IMR-90 (cell line): ENCODE measurements at regions of chr2 and their contacts with region 1.

Region 1: DNA sequence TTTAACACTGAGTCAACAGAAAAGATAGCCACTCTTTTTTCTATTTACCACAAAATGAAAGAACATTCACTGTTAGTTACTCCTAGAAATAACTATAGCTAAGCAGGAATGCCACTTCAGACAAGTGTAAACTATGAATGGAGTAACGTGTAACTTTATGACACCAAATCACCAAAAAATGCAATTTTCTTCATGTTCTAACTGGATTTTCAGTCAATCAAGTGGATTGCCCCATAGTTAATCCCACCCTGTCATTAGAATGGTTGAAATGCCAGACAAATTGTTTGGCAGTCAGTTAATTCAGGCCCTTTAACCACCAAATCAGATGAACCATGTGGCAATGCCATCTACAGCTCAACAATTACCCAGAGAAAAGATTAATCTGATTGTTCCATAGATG is 9.9 kb downstream of the EPHA4 start:
- DNase-seq: no peak
- ATAC-seq: no peak
- H3K4me3 ChIP-seq: no peak overlapping the region
- H3K27ac ChIP-seq: no peak overlapping the region
- H3K4me1 ChIP-seq: no peaks in the 10 kb centered on the region; the same call in 1 of the 2 replicates
- H3K27me3 ChIP-seq: no peaks in the 10 kb centered on the region
- CTCF ChIP-seq: no peak
- POLR2A ChIP-seq: no peak
- RAD21 ChIP-seq: no peak

Region 2: GRCh38 chr2:221322741-221323140 is 239.5 kb before region 1 on chr2:
- CTCF ChIA-PET with region 1: no interaction called
- POLR2A ChIA-PET with region 1: no interaction called
- dilution Hi-C with region 1: no loop called
- in situ Hi-C with region 1: no loop called
- intact Hi-C with region 1: no loop called
- DNase-seq: no peak
- ATAC-seq: no peak
- H3K4me3 ChIP-seq: no peak overlapping the region
- H3K27ac ChIP-seq: no peak overlapping the region
- H3K4me1 ChIP-seq: no peaks in the 10 kb centered on the region
- H3K27me3 ChIP-seq: peaks cover 6% of the 10 kb centered on the region; the same call in 1 of the 2 replicates
- CTCF ChIP-seq: no peak
- POLR2A ChIP-seq: no peak
- RAD21 ChIP-seq: no peak

Region 3: GRCh38 chr2:221517696-221518151 is 44.5 kb before region 1 on chr2:
- CTCF ChIA-PET with region 1: no interaction called
- POLR2A ChIA-PET with region 1: no interaction called
- dilution Hi-C with region 1: no loop called
- in situ Hi-C with region 1: no loop called
- intact Hi-C with region 1: loop called (anchors 5 kb)
- DNase-seq: peak; percentile 88
- ATAC-seq: peak; percentile 56
- H3K4me3 ChIP-seq: no peak overlapping the region
- H3K27ac ChIP-seq: no peak overlapping the region; the same call in 1 of the 2 replicates
- H3K4me1 ChIP-seq: peaks cover 11% of the 10 kb centered on the region
- H3K27me3 ChIP-seq: no peaks in the 10 kb centered on the region
- CTCF ChIP-seq: no peak
- POLR2A ChIP-seq: no peak
- RAD21 ChIP-seq: no peak

Region 4: GRCh38 chr2:221958224-221958623 is 396.0 kb after region 1 on chr2:
- CTCF ChIA-PET with region 1: no interaction called
- POLR2A ChIA-PET with region 1: no interaction called
- dilution Hi-C with region 1: no loop called
- in situ Hi-C with region 1: no loop called
- intact Hi-C with region 1: no loop called
- DNase-seq: no peak
- ATAC-seq: no peak
- H3K4me3 ChIP-seq: no peak overlapping the region
- H3K27ac ChIP-seq: no peak overlapping the region
- H3K4me1 ChIP-seq: no peaks in the 10 kb centered on the region
- H3K27me3 ChIP-seq: no peaks in the 10 kb centered on the region
- CTCF ChIP-seq: no peak
- POLR2A ChIP-seq: no peak
- RAD21 ChIP-seq: no peak